GM10248 (cell line): ENCODE measurements at regions of chr1 and their contacts with region 1.

Region 1: DNA sequence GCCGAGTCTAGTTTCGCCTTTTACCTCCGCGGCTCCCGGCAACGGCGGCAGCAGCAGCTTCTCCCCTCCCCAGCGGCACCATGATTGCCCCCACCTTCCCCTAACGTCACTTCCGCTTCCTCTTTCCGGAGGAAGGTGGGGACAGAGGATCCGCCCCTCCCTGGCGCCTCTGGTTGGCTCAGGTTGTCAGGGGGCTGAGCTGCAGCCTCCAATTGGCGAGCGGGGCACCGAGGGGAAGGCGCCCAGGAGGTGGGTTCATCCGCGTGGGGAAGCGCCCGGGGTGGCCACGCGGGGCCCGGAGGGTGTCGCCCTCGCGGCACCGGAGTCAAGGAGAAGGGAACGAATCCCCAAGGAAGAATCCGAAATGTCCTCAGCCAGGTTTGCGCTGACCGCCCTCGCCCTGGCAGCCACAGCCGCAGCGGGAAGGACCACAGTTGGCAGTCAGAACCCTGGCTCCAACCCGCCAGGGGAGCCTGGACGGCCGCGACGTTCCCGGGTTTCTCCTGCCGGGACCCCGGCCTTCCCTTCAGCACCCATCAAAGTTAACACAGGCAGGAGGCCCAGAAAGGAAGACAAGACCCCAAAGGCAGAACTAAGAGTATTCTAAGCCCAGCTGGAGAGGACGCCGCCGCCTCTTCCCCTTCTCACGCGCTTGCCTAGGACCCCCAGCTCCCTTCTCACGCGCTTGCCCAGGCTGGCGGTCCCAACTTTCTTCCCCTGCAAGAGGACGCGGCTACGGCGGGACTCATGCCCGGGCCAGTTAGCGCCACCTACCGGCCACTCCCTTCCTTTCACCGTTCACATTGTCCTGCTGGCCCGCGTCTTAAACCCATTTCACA is at the start of gene MTF1:
- DNase-seq: peak; percentile 100
- CTCF ChIP-seq: peak; percentile 89

Region 2: GRCh38 chr1:37498872-37499617 is 360.7 kb before region 1 on chr1:
- CTCF ChIA-PET with region 1: no interaction called
- POLR2A ChIA-PET with region 1: no interaction called
- DNase-seq: no peak
- CTCF ChIP-seq: no peak

Region 3: DNA sequence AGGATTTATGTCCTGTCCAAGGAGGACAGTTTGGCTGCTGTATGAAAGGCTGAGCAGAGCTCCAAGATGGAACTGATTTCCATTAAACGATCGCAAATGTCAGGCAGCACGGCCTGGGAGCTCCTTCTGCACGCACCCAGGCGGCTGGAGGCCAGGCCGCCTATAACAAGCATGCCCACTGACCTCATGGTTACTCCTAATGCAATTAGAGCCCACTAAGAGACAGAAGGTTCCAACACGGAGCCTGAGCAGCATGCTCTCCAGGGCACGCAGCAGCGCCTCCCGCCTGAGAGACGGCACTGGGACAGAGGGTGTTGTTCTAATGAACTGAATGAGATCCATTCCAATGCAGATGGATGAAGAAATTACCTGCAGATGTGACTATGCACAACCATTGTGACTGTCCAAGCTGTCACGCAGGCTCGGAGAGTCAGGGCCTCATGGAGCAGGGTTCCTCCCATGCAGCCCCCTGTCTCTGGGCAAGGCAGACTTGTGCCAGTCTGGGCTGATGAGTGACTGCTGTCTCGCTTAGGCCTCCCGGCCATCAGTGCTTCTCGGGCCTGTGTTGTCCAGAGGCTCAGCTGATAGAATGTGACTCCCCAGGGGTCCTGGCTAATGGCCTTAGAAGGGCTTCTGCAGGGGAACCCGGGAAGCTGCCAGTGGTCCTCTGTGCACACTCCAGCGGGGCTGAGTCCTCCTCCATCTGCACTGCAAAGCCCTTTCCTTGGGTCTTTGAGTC is 192.5 kb before region 1 on chr1:
- CTCF ChIA-PET with region 1: no interaction called
- POLR2A ChIA-PET with region 1: no interaction called
- DNase-seq: no peak
- CTCF ChIP-seq: no peak

Region 4: DNA sequence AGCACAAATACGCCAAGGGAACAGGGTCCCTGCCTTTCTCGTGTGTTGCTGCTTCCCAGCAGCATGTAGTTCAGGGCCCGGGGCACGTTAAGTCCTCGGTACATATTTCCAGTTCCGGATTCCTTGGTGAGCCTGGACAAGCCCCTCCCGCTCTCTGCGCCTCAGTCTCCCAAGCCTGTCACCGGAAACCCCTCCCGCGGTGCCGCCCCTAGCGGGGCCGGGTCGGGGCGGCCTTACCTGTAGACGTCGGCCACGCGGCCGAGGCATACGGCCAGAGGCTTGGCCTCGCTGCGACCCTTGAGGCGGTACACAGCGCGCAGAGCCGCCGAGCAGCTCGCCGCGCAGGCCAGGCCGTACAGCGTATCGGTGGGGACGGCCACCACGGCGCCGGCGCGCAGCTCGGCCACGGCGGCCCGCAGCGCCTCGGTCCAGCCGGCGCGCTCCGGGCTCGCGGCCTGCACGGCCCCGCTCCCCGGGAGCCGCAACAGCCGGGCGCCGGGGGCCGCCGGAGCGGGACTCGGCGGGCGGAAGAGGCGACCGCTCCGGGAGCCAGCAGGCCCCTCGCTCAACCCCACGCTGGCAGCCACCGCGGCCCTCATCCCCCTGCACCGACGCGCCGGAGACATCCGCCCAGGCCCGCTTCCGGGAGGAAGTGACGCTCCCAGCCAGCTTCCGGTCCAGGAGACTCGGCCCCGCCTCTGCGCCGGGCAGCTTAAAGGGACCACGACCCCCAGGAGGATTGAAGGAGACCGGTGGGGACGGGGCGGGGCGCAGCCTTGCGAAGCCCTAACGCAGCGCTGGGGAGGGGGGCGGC is 52.0 kb before region 1 on chr1 and contains the starts of genes C1orf122 and YRDC:
- CTCF ChIA-PET with region 1: interaction called, 14 read pairs
- POLR2A ChIA-PET with region 1: interaction called, 3 read pairs
- DNase-seq: peak; percentile 98
- CTCF ChIP-seq: no peak

Region 5: DNA sequence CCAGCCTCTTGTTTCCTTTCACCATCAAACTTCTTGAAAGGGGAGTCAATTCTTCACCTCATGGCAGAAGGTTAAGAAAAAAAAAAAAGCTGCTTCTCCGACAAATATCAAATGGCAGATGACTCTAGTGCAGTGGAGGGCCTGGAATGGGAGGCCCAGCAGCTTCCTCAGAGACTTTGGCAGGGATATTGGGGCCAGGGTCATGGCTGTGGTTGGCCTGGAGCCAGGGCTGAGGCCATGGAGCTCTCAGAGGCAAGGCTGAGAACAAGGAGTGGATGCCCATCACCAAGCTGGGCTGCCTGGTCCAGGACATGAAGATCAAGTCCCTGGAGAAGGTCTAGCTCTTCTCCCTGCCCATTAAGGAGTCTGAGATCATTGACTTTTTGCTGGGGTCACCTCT is 19.0 kb before region 1 on chr1:
- CTCF ChIA-PET with region 1: interaction called, 51 read pairs
- POLR2A ChIA-PET with region 1: no interaction called
- DNase-seq: no peak
- CTCF ChIP-seq: no peak

Region 6: GRCh38 chr1:37875834-37876233 is 16.1 kb after region 1 on chr1:
- CTCF ChIA-PET with region 1: interaction called, 39 read pairs
- POLR2A ChIA-PET with region 1: no interaction called
- DNase-seq: no peak
- CTCF ChIP-seq: no peak